HAP-1 (cell line): ENCODE measurements at regions of chrX and their contacts with region 1.

Region 1: DNA sequence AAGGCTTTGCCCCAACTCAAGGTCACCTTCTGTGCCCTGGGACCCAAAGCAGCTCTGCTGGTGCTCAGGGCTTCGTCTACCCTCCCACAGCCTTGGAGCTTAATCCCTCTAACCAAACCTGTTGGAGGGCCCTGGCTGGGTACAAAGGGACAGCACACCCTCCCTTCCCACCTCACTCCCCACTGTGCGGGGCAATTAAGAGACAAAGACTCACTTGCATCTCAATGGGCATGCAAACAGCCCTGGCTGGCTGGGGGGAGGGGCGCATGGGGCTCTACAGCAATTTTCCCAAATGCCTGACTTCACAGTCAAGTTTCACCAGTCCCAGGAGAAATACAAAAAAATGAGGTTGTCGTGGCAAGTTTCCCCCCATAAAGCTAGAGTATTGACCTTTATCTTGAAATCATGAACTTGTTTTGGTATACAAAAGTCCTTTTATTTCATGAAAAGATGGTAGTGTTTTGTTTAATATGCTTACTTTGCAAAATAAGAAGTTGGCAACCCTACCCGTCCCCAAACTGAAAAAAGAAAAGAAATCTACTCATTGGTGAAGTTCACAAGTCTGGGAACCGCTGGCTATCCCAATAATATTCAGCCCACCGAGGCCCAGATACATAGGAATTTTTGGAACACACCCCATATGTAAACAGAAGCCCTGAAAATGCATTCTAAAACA is 4.1 kb upstream of the CD99L2 start:
- DNase-seq: peak; percentile 99
- H3K4me3 ChIP-seq: peak overlapping the region; percentile 5
- H3K4me1 ChIP-seq: peaks cover 69% of the 10 kb centered on the region
- H3K27me3 ChIP-seq: no peaks in the 10 kb centered on the region

Region 2: GRCh38 chrX:150982788-150983520 is 80.4 kb after region 1 on chrX and contains the start of gene HMGB3:
- in situ Hi-C with region 1: loop called (anchors 5 kb)
- DNase-seq: peak; percentile 98 to 99
- H3K4me3 ChIP-seq: peak within 1 kb of the TSS; percentile 55
- H3K4me1 ChIP-seq: peaks cover 6% of the 10 kb centered on the region; the same call in 1 of the 2 replicates
- H3K27me3 ChIP-seq: no peaks in the 10 kb centered on the region